T-cell (primary cell): ENCODE measurements at regions of chr11 and their contacts with region 1.

Region 1: DNA sequence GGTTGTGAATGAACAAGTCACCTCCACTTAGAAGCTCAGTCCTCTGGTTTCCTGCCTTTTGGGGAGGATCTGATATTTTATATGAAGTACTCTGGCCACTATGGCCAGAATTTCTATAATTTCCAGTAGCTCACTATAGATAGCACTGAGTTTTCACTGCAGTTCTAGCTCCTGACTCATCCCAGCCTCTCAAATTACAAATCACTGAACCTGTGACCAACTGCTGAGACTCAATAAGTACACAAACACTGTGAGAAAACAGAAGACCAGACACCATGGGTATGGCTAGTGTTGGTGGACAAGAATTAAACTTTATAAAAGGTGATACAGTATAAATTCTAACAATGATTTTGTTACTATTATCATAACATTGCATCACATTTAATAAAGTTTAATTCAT is 47.1 kb upstream of the UCP3 start:
- DNase-seq: no peak
- ATAC-seq: no peak
- H3K4me3 ChIP-seq: no peak overlapping the region
- H3K4me3 Mint-ChIP-seq: no peak overlapping the region
- H3K27ac ChIP-seq: no peak overlapping the region
- H3K27ac Mint-ChIP-seq: no peak overlapping the region
- H3K4me1 ChIP-seq: no peaks in the 10 kb centered on the region
- H3K4me1 Mint-ChIP-seq: peaks cover 5 to 10% (median 5%) of the 10 kb centered on the region in 3 donors
- H3K27me3 ChIP-seq: no peaks in the 10 kb centered on the region
- H3K27me3 Mint-ChIP-seq: no peaks in the 10 kb centered on the region

Region 2: DNA sequence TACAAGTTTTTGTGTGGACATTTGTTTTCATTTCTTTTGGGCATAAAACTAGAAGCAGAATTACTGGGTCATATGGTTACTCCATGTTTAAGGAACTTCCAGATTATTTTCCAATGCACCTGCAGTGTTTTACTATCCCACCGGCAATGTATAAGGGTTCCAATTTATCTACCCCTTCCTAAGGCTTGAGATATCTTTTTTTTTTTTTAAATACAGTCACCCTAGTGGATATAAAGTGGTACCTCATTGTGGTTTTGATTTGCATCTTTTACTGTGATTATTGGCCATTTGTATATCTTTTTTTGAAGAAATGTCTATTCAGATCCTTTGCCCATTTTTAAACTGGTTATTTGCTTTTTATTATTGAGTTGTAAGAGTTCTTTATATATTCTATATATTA is 12.5 kb before region 1 on chr11:
- CTCF ChIA-PET with region 1: no interaction called
- POLR2A ChIA-PET with region 1: no interaction called
- DNase-seq: no peak
- ATAC-seq: no peak
- H3K4me3 ChIP-seq: no peak overlapping the region
- H3K4me3 Mint-ChIP-seq: no peak overlapping the region
- H3K27ac ChIP-seq: no peak overlapping the region
- H3K27ac Mint-ChIP-seq: no peak overlapping the region
- H3K4me1 ChIP-seq: no peaks in the 10 kb centered on the region
- H3K4me1 Mint-ChIP-seq: peaks cover 0 to 5% (median 1%) of the 10 kb centered on the region in 3 donors
- H3K27me3 ChIP-seq: no peaks in the 10 kb centered on the region
- H3K27me3 Mint-ChIP-seq: no peaks in the 10 kb centered on the region

Region 3: DNA sequence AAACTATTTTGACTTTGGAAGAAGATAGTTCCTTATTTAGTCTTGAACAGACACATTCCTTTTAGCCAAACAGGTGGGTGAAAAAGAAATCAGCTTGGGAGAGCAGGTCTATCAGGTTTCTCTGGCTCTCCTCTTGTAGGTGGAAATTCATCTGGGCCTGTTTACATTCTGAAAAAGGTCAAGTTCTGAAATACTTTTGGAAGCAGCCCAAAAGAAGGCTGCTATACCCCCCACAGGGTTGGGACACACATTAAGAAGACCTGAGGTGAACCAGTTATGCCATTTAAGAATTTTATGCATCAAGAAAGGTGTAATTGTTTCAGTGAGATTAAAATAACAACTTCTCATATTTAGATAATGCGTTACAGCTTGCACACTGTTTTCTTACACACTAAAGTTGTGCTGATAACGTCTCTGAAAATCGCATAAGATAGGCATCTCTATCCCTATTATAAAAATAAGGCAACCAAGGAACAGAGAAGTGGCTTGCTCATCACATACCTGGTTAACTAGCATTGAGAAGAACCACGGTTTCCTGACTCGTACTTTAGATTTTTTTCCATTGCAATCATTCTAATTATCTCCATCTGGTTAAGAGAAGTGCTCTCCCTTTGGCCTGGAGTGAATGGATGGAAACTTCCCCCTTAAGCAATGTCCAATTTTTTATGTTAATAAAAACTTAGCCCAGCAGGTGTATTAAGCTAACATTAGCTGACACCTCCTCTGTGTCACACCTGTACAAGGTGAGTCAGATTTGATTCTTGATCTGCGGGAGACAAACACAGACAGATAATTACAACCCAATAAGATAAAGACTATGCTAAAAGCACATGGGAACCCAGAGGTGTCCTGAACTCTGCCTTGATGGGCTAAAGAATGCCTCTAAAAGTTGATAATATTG is 13.5 kb after region 1 on chr11:
- CTCF ChIA-PET with region 1: interaction called in 1 of 2 experiments, 3 read pairs
- POLR2A ChIA-PET with region 1: interaction called in 1 of 2 experiments, 15 read pairs
- DNase-seq: no peak
- ATAC-seq: no peak
- H3K4me3 ChIP-seq: no peak overlapping the region
- H3K4me3 Mint-ChIP-seq: no peak overlapping the region
- H3K27ac ChIP-seq: no peak overlapping the region
- H3K27ac Mint-ChIP-seq: no peak overlapping the region
- H3K4me1 ChIP-seq: no peaks in the 10 kb centered on the region
- H3K4me1 Mint-ChIP-seq: peaks cover 0 to 5% (median 0%) of the 10 kb centered on the region in 3 donors
- H3K27me3 ChIP-seq: no peaks in the 10 kb centered on the region
- H3K27me3 Mint-ChIP-seq: no peaks in the 10 kb centered on the region

Region 4: GRCh38 chr11:74094400-74094799 is 38.5 kb after region 1 on chr11:
- CTCF ChIA-PET with region 1: no interaction called
- POLR2A ChIA-PET with region 1: no interaction called
- DNase-seq: no peak
- ATAC-seq: no peak
- H3K4me3 ChIP-seq: no peak overlapping the region
- H3K4me3 Mint-ChIP-seq: no peak overlapping the region
- H3K27ac ChIP-seq: no peak overlapping the region
- H3K27ac Mint-ChIP-seq: no peak overlapping the region
- H3K4me1 ChIP-seq: no peaks in the 10 kb centered on the region
- H3K4me1 Mint-ChIP-seq: peaks cover 0 to 7% (median 4%) of the 10 kb centered on the region in 3 donors
- H3K27me3 ChIP-seq: no peaks in the 10 kb centered on the region
- H3K27me3 Mint-ChIP-seq: no peaks in the 10 kb centered on the region

Region 5: GRCh38 chr11:74171997-74172396 is 116.1 kb after region 1 on chr11:
- CTCF ChIA-PET with region 1: no interaction called
- POLR2A ChIA-PET with region 1: no interaction called
- DNase-seq: peak in 1 of 35 experiments; percentile 3
- ATAC-seq: no peak
- H3K4me3 ChIP-seq: peak overlapping the region; percentile 64 to 81
- H3K4me3 Mint-ChIP-seq: no peak overlapping the region
- H3K27ac ChIP-seq: peak overlapping the region; percentile 74
- H3K27ac Mint-ChIP-seq: no peak overlapping the region
- H3K4me1 ChIP-seq: peaks cover 23 to 24% of the 10 kb centered on the region in 2 experiments
- H3K4me1 Mint-ChIP-seq: peaks cover 4 to 21% (median 19%) of the 10 kb centered on the region in 3 donors
- H3K27me3 ChIP-seq: no peaks in the 10 kb centered on the region
- H3K27me3 Mint-ChIP-seq: no peaks in the 10 kb centered on the region